Lower lobe of right lung (tissue), 2 donors: ENCODE measurements at regions of chrX and their contacts with region 1.

Region 1: GRCh38 chrX:24759786-24760185 is 66.1 kb downstream of the POLA1 start:
- DNase-seq: no peak
- ATAC-seq: no peak
- H3K4me3 ChIP-seq: no peak overlapping the region
- H3K27ac ChIP-seq: no peak overlapping the region
- H3K4me1 ChIP-seq: no peaks in the 10 kb centered on the region
- H3K27me3 ChIP-seq: no peaks in the 10 kb centered on the region
- CTCF ChIP-seq: no peak

Region 2: GRCh38 chrX:24607616-24608015 is 152.2 kb before region 1 on chrX:
- intact Hi-C with region 1: no loop called
- DNase-seq: no peak
- ATAC-seq: peak; percentile 52 to 54
- H3K4me3 ChIP-seq: no peak overlapping the region
- H3K27ac ChIP-seq: no peak overlapping the region
- H3K4me1 ChIP-seq: no peaks in the 10 kb centered on the region
- H3K27me3 ChIP-seq: no peaks in the 10 kb centered on the region
- CTCF ChIP-seq: no peak

Region 3: DNA sequence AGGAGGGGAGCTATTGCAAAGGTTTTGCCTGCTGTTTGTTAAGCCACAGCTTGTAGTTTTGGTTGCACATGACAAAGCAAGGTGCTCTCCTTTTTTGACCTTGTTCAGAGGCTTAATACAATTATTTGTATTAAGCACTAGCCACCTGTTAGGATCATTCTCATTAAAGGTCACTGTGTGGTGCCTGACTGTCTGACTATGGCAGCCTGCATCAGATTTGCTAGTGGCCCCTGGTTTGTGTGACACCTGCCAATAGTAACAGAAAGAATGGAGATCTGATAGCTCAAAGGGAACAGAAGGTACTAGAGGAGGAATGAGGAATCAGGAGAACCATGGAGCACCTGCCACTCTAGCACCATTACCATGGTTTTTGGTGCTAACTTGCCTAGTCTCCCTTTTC is 36.4 kb after region 1 on chrX:
- intact Hi-C with region 1: no loop called
- DNase-seq: no peak
- ATAC-seq: no peak
- H3K4me3 ChIP-seq: no peak overlapping the region
- H3K27ac ChIP-seq: no peak overlapping the region
- H3K4me1 ChIP-seq: no peaks in the 10 kb centered on the region
- H3K27me3 ChIP-seq: no peaks in the 10 kb centered on the region
- CTCF ChIP-seq: no peak

Region 4: DNA sequence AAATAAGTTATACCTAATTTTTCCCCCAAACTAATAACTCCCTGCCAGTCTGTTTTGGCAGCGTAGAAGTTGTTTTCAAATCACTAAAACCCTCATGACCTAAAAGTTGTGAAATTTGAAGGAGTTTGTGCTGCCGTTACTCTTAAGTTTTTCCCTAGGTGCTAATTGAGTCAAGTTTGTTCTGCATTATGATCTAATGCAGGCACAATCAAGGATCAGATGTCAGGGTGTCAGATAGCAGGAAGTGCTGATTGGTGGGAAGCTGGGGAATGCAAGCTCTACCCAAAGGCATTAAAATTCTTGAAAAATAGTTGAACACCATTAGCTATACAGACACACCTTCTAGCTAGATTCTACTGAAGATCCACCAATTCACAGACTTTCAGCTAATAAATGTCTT is 204.0 kb after region 1 on chrX:
- intact Hi-C with region 1: no loop called
- DNase-seq: no peak
- ATAC-seq: no peak
- H3K4me3 ChIP-seq: no peak overlapping the region
- H3K27ac ChIP-seq: no peak overlapping the region
- H3K4me1 ChIP-seq: no peaks in the 10 kb centered on the region
- H3K27me3 ChIP-seq: no peaks in the 10 kb centered on the region
- CTCF ChIP-seq: no peak

Region 5: GRCh38 chrX:25004485-25005032 is 244.8 kb after region 1 on chrX:
- intact Hi-C with region 1: no loop called
- DNase-seq: no peak
- ATAC-seq: peak in 1 of 2 donors; percentile 26
- H3K4me3 ChIP-seq: no peak overlapping the region
- H3K27ac ChIP-seq: no peak overlapping the region
- H3K4me1 ChIP-seq: peaks cover 10% of the 10 kb centered on the region
- H3K27me3 ChIP-seq: peaks cover 53% of the 10 kb centered on the region
- CTCF ChIP-seq: no peak

Region 6: GRCh38 chrX:25144043-25144940 is 384.5 kb after region 1 on chrX:
- intact Hi-C with region 1: loop called (anchors 10 kb)
- DNase-seq: peak; percentile 54
- ATAC-seq: peak in 1 of 2 donors; percentile 59
- H3K4me3 ChIP-seq: no peak overlapping the region
- H3K27ac ChIP-seq: no peak overlapping the region
- H3K4me1 ChIP-seq: no peaks in the 10 kb centered on the region
- H3K27me3 ChIP-seq: no peaks in the 10 kb centered on the region
- CTCF ChIP-seq: peak; percentile 70